ENCODE measurements at regions of chr16 and their contacts with region 1.

Region 1: DNA sequence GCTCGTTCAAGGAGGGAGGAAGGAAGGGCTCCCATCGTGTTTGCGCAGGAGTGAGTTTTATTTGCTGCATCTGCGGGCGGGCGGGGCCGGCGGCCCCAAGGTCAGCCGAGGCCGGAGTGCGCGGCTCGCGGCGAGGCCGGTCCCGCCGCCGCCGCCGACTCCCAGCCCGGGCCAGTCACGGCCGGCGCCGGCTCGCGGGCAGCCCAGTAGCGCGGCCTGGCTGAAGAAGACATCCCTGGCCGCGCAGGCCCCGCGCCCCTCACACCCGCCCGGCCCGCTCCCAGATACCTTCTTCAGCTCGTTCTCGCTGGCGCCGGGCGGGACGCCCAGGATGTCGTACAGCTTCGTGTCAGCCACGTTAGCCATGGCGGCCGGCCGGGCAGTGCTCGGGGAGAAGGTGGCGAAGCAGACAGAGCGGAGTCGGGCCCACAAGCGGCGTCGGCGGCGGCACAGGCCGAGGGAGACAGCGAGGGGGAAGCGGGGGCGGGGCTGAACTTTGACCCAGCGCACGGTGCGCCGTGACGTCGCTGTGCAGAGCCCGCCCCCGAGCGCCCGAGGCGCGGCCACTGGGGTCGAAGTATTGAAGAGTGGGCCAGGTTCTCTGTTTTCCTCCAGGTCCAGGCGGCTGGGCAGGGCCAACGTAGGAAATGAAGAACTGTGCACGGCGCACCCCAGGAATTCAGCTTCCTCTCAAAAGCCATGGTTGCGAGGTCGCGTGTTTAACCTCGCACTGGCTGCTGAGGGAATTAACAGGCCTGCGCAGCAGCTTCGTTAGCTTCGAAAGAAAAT is at the start of gene DNAJA2:
- DNase-seq: peak; percentile 92
- H3K4me3 Mint-ChIP-seq: peak within 1 kb of the TSS; percentile 93
- H3K27ac Mint-ChIP-seq: peak within 1 kb of the TSS; percentile 98
- H3K4me1 Mint-ChIP-seq: peaks cover 62% of the 10 kb centered on the region
- H3K27me3 Mint-ChIP-seq: no peaks in the 10 kb centered on the region
- total RNA-seq, gene DNAJA2: 56.9 to 59.9 TPM

Region 2: GRCh38 chr16:46822270-46822669 is 151.1 kb before region 1 on chr16:
- CTCF ChIA-PET with region 1: no interaction called
- intact Hi-C with region 1: loop called (anchors 2 kb)
- DNase-seq: peak; percentile 74
- H3K4me3 Mint-ChIP-seq: no peak overlapping the region
- H3K27ac Mint-ChIP-seq: no peak overlapping the region
- H3K4me1 Mint-ChIP-seq: peaks cover 30% of the 10 kb centered on the region
- H3K27me3 Mint-ChIP-seq: no peaks in the 10 kb centered on the region

Region 3: GRCh38 chr16:46929378-46930332 is 43.7 kb before region 1 on chr16:
- CTCF ChIA-PET with region 1: no interaction called
- intact Hi-C with region 1: loop called (anchors 1 kb)
- DNase-seq: peak; percentile 77
- H3K4me3 Mint-ChIP-seq: no peak overlapping the region
- H3K27ac Mint-ChIP-seq: no peak overlapping the region
- H3K4me1 Mint-ChIP-seq: no peaks in the 10 kb centered on the region
- H3K27me3 Mint-ChIP-seq: no peaks in the 10 kb centered on the region

Region 4: GRCh38 chr16:47018223-47018891 is 45.0 kb after region 1 on chr16:
- CTCF ChIA-PET with region 1: no interaction called
- intact Hi-C with region 1: loop called (anchors 1 kb)
- DNase-seq: peak; percentile 73
- H3K4me3 Mint-ChIP-seq: no peak overlapping the region
- H3K27ac Mint-ChIP-seq: no peak overlapping the region
- H3K4me1 Mint-ChIP-seq: peaks cover 24% of the 10 kb centered on the region
- H3K27me3 Mint-ChIP-seq: no peaks in the 10 kb centered on the region

Region 5: DNA sequence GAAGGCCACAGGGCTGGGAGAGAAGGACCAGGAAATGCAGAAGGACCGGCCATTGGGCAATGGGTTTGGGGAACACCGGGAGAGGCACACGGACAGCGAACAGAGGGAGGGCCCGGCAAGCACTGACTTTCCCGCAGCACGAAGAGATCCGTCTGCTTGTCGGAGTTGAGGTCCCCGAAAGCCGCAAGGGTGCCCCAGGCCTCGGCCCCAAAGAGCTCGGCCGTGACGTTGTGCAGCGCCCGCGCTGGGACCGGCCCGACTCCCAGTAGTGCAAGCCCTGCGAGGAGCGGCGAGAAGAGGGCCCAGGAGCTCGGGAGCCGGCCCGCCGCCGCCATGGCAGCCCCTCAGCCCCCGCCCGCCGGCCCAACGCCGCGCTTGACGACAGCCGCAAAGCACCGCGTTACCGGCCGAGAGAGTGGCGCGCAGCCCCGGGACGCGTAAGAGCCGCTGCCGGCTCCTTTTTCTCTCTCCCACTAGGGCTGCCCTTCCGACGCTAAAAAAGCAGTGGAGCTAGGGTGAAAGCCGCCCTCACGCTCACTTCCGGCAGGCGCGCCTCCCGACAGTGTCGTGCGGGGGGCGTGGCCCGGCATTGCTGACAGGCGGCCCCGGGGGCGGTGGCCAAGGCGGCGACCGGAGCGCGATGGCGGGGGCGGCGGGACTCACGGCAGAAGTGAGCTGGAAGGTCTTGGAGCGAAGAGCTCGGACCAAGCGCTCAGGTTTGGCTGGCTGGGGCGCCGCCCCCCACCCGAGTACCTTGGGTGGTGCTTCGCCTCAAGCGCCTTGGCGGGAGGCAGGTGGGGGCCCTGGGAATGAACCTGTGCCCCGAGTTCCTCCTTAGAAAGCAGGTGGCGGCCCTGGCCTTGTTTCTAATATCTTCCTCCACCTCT is 487.6 kb after region 1 on chr16 and contains the starts of genes ITFG1 and PHKB:
- CTCF ChIA-PET with region 1: no interaction called
- intact Hi-C with region 1: loop called (anchors 2 kb)
- DNase-seq: peak; percentile 93
- H3K4me3 Mint-ChIP-seq: peak within 1 kb of the TSS; percentile 92
- H3K27ac Mint-ChIP-seq: peak within 1 kb of the TSS; percentile 88
- H3K4me1 Mint-ChIP-seq: peaks cover 58% of the 10 kb centered on the region
- H3K27me3 Mint-ChIP-seq: no peaks in the 10 kb centered on the region
- total RNA-seq, gene ITFG1: 17.6 to 18.3 TPM
- total RNA-seq, gene PHKB: 22.5 to 25.3 TPM

Region 6: DNA sequence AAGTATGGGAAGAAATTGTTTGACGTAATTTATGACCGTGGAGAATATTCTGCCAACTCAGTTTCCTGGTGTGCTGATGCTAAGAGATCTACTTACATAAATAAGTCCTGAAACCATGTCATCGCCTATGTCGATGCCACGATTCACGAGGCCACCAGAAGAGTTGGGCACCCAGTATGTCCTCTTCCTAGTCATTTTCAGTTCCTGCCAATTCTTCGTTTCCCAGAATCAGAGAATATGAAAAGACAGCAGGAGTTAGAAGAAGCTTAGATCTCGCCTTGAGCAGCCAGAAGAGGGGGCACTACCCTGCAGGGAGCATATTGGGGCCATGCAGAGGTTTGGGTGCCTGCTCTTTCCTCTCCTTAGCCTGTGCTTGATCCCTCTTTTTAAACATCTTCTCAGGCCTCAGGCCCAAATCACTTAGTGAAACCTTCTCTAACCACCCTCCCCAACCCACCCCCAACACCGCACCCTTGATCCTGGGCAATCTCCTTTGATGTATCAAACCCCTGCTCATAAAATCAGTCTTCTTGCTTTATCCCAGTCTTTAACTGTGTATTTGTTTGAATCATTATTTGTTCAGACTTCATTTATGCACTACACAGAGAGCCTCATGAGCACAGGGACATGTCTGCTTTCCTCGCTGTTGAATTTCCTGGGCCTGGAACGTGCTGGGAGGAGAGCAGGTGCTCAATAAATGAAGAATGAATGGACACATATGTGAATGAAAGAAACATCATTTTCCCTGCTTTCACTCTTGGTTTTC is 1258.5 kb after region 1 on chr16:
- CTCF ChIA-PET with region 1: no interaction called
- intact Hi-C with region 1: loop called (anchors 5 kb)
- DNase-seq: peak; percentile 73
- H3K4me3 Mint-ChIP-seq: no peak overlapping the region
- H3K27ac Mint-ChIP-seq: peak overlapping the region; percentile 50
- H3K4me1 Mint-ChIP-seq: peaks cover 21% of the 10 kb centered on the region
- H3K27me3 Mint-ChIP-seq: peaks cover 2% of the 10 kb centered on the region

Measured in activated naive CD4-positive, alpha-beta T cell treated with anti-CD3 and anti-CD28 coated beads for 36 hours (primary cell).